Posterior vena cava (tissue), 2 donors: ENCODE measurements at regions of chr1 and their contacts with region 1.

Region 1: GRCh38 chr1:236058141-236058934 is 6.6 kb downstream of the NID1 start:
- DNase-seq: no peak

Region 2: DNA sequence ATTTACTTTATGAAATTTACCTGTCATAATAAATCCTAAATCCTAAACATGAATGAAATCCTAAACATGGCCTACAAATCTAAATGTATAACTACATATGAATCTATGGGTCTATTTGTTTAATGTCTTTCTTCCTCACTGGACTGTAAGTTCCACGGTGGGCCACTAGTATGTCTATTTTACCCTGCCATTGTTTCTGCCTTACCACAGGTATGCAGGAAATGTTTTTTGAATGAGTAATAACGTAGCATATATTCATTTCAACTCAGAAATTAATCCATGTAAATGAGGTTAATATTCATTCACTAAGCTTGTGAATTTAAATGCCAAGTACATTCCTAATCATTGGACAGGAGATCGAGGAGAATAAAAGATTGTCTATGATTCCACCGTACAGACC is 589.4 kb before region 1 on chr1:
- intact Hi-C with region 1: no loop called
- DNase-seq: no peak

Region 3: GRCh38 chr1:235984041-235984825 is 74.1 kb before region 1 on chr1:
- intact Hi-C with region 1: loop called in 1 of 2 experiments (anchors 10 kb)
- DNase-seq: no peak